Naive thymus-derived CD4-positive, alpha-beta T cell (primary cell): ENCODE measurements at regions of chr12 and their contacts with region 1.

Region 1: GRCh38 chr12:53267999-53268647 is at the start of gene ESPL1:
- DNase-seq: peak; percentile 67 to 91 (median 81)
- ATAC-seq: peak; percentile 93
- H3K4me3 ChIP-seq: peak within 1 kb of the TSS; percentile 80
- H3K4me3 Mint-ChIP-seq: peak within 1 kb of the TSS; percentile 95 to 99 (median 96)
- H3K27ac ChIP-seq: peak within 1 kb of the TSS; percentile 83
- H3K27ac Mint-ChIP-seq: peak within 1 kb of the TSS; percentile 44 to 98 (median 88)
- H3K4me1 ChIP-seq: peaks cover 9 to 11% of the 10 kb centered on the region in 2 donors
- H3K4me1 Mint-ChIP-seq: peaks cover 10 to 54% (median 20%) of the 10 kb centered on the region in 7 donors
- H3K27me3 ChIP-seq: no peaks in the 10 kb centered on the region
- H3K27me3 Mint-ChIP-seq: no peaks in the 10 kb centered on the region
- total RNA-seq, gene ESPL1: 0.08 to 65.4 (median 1.1) TPM

Region 2: DNA sequence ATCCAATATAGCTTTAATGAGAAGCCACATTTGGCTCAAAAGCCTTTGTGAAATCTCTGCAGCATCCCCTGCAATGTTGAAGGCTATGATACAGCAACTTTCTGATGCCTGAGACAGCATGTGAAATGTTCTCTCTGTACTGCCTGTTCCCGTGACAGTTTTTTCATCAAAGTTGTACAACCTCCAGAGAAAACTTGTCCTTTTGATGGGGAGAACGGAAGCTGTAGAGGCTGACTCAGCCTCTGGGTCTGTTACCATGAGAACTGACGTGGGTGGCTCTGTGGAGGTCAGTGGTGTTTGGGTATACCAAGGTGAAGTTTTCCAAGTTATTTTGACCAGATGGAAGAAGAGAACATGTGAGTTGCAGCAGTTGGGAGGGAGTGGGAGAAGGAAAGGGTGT is 1826.5 kb before region 1 on chr12:
- CTCF ChIA-PET with region 1: no interaction called
- POLR2A ChIA-PET with region 1: no interaction called
- intact Hi-C with region 1: no loop called
- DNase-seq: no peak
- ATAC-seq: no peak
- H3K4me3 ChIP-seq: no peak overlapping the region
- H3K4me3 Mint-ChIP-seq: peak overlapping the region in 1 of 10 donors; percentile 34
- H3K27ac ChIP-seq: no peak overlapping the region
- H3K27ac Mint-ChIP-seq: peak overlapping the region in 2 of 9 donors; percentile 26 to 48
- H3K4me1 ChIP-seq: peaks cover 0 to 8% of the 10 kb centered on the region in 2 donors
- H3K4me1 Mint-ChIP-seq: peaks cover 11 to 48% (median 25%) of the 10 kb centered on the region in 7 donors
- H3K27me3 ChIP-seq: no peaks in the 10 kb centered on the region
- H3K27me3 Mint-ChIP-seq: peaks cover 0 to 4% (median 0%) of the 10 kb centered on the region in 5 donors

Region 3: DNA sequence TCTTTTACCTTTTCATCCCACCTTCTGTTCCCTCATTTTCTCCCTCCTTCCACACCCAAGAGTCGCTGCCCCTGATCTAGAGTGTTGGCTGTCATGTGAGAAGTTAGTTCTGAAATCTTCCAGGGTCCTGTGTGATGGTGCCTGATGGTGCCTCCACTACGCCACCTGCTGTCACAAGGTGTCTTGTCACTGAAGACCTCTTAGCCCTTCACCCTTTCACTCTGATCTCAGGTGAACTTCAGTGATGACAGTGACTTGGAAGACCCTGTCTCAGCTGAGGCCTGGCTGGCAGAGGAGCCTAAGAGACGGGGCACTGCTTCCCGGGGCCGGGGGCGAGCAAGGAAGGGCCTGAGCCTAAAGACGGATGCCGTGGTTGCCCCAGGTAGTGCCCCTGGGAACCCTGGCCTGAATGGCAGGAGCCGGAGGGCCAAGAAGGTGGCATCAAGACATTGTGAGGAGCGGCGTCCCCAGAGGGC is 19.7 kb after region 1 on chr12:
- CTCF ChIA-PET with region 1: interaction called, 8 read pairs
- POLR2A ChIA-PET with region 1: no interaction called
- intact Hi-C with region 1: loop called in 1 of 2 experiments (anchors 2 kb)
- DNase-seq: peak; percentile 43 to 76 (median 69)
- ATAC-seq: peak; percentile 94
- H3K4me3 ChIP-seq: no peak overlapping the region
- H3K4me3 Mint-ChIP-seq: no peak overlapping the region
- H3K27ac ChIP-seq: no peak overlapping the region
- H3K27ac Mint-ChIP-seq: peak overlapping the region in 4 of 9 donors; percentile 8 to 86 (median 25)
- H3K4me1 ChIP-seq: no peaks in the 10 kb centered on the region
- H3K4me1 Mint-ChIP-seq: peaks cover 4 to 11% (median 5%) of the 10 kb centered on the region in 7 donors
- H3K27me3 ChIP-seq: no peaks in the 10 kb centered on the region
- H3K27me3 Mint-ChIP-seq: no peaks in the 10 kb centered on the region